ENCODE measurements at regions of chr15 and their contacts with region 1.

Region 1: GRCh38 chr15:88904624-88905327 is 8.4 kb downstream of the MFGE8 start:
- DNase-seq: peak; percentile 98
- H3K4me3 Mint-ChIP-seq: peak overlapping the region; percentile 42
- H3K27ac Mint-ChIP-seq: peak overlapping the region; percentile 94
- H3K4me1 Mint-ChIP-seq: peaks cover 43% of the 10 kb centered on the region
- H3K27me3 Mint-ChIP-seq: no peaks in the 10 kb centered on the region

Region 2: DNA sequence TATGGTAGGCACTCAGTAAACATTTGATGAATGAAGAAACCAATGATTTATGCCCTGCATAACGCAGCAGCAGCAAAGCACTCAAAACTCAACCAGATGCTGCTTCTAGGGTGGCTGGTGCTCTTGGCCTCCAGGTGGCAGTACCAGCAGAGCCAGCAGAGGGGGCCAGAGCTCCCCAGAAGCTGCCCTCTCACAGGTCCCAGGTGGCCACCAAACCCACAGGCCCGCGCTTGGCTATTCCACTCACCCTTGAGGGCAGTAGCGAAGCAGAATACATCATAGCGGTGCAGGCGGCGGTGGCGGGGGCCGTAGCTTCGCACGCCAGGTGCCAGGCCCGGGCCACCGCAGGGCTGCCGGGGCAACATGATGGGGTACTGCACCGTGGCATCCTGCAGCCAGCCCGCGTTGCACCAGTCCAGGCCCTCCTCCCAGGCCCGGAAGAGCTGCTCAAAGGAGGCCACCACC is 26.0 kb before region 1 on chr15:
- CTCF ChIA-PET with region 1: interaction called, 15 read pairs
- DNase-seq: peak; percentile 69
- H3K4me3 Mint-ChIP-seq: no peak overlapping the region
- H3K27ac Mint-ChIP-seq: no peak overlapping the region
- H3K4me1 Mint-ChIP-seq: no peaks in the 10 kb centered on the region
- H3K27me3 Mint-ChIP-seq: no peaks in the 10 kb centered on the region

Region 3: GRCh38 chr15:88918738-88919137 is 14.0 kb after region 1 on chr15:
- CTCF ChIA-PET with region 1: interaction called, 17 read pairs
- DNase-seq: no peak
- H3K4me3 Mint-ChIP-seq: no peak overlapping the region
- H3K27ac Mint-ChIP-seq: no peak overlapping the region
- H3K4me1 Mint-ChIP-seq: peaks cover 17% of the 10 kb centered on the region
- H3K27me3 Mint-ChIP-seq: peaks cover 22% of the 10 kb centered on the region

Region 4: DNA sequence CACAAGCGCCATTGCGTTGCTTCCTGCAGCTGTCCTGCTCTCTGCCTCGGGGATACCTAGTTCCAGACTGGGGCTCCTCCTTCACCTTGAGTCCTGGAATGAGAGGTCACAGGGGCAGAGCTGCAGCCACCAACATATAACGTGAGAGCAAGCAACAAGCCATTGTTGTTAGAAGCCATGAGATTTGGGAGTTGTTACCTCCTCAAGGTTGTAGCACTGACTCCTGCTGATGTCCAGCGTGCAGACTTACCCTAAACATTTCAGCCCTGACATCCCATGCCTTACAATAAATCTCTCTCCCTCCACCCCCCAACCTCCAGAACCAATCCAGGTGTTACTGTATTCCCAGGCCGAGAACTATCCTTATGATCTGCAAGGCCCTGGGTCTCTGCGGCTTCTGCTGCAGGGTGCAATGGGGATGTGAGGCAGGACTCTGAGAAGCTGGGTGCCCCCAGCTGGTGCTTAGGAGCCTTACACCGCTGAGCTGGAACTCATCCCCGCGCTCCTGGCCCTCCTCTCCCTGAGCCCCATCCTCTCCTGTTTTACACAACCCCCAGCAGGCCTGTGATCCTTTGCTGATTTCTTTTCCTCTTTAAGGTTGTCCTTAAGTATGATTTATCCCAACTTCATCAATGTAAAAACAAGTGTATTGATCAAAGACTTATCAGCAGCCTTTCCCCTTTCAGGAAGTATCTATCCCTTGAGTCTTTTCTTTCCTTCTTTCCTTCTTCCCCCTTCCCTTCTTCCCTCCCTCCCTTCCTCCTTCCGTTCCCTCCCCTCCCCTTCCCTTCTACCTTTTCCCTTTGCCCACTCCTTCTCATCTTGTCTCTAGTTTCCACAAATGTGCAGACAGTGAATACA is 99.3 kb after region 1 on chr15:
- CTCF ChIA-PET with region 1: interaction called, 15 read pairs
- DNase-seq: peak; percentile 25
- H3K4me3 Mint-ChIP-seq: no peak overlapping the region
- H3K27ac Mint-ChIP-seq: no peak overlapping the region
- H3K4me1 Mint-ChIP-seq: peaks cover 4% of the 10 kb centered on the region
- H3K27me3 Mint-ChIP-seq: peaks cover 37% of the 10 kb centered on the region

Region 5: GRCh38 chr15:89017370-89018066 is 112.7 kb after region 1 on chr15:
- CTCF ChIA-PET with region 1: interaction called, 66 read pairs
- DNase-seq: peak; percentile 90
- H3K4me3 Mint-ChIP-seq: peak overlapping the region; percentile 31
- H3K27ac Mint-ChIP-seq: peak overlapping the region; percentile 19
- H3K4me1 Mint-ChIP-seq: peaks cover 38% of the 10 kb centered on the region
- H3K27me3 Mint-ChIP-seq: peaks cover 45% of the 10 kb centered on the region

Region 6: GRCh38 chr15:89177633-89178306 is 273.0 kb after region 1 on chr15:
- CTCF ChIA-PET with region 1: interaction called, 20 read pairs
- DNase-seq: peak; percentile 82
- H3K4me3 Mint-ChIP-seq: no peak overlapping the region
- H3K27ac Mint-ChIP-seq: peak overlapping the region; percentile 73
- H3K4me1 Mint-ChIP-seq: peaks cover 6% of the 10 kb centered on the region
- H3K27me3 Mint-ChIP-seq: no peaks in the 10 kb centered on the region

Measured in activated naive CD4-positive, alpha-beta T cell treated with anti-CD3 and anti-CD28 coated beads, Interleukin-2, amount 10 ng/mL, durations not matched to agents 7 days and 5 days (primary cell).